ENCODE measurements at regions of chr1 and their contacts with region 1.

Region 1: GRCh38 chr1:173020138-173020750 is 30.5 kb downstream of the TNFSF18 start:
- DNase-seq: no peak
- H3K4me3 Mint-ChIP-seq: no peak overlapping the region
- H3K27ac Mint-ChIP-seq: no peak overlapping the region
- H3K4me1 Mint-ChIP-seq: no peaks in the 10 kb centered on the region
- H3K27me3 Mint-ChIP-seq: peaks cover 9% of the 10 kb centered on the region

Region 2: DNA sequence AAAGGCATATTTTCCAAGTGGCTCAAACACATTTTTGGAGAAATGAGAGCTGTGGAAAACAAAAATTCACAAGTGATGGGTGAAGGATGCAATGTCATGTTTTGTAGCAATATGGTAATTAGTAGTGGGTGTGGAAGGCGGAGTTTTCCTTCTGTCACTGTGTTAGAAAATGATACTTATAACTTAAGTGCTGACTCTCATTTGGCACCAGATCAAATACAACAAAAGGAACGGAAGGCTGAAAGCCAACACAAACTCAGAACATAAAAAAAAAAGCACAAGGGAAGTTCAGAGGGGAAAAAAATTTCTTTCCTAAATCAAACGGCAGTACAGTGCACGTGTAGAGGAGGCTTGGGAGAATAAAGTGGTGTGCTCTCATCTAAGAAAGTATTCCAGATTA is 30.6 kb after region 1 on chr1 and contains the start of gene TNFSF18:
- intact Hi-C with region 1: loop called (anchors 1 kb)
- DNase-seq: no peak
- H3K4me3 Mint-ChIP-seq: no peak within 1 kb of the TSS
- H3K27ac Mint-ChIP-seq: no peak within 1 kb of the TSS
- H3K4me1 Mint-ChIP-seq: no peaks in the 10 kb centered on the region
- H3K27me3 Mint-ChIP-seq: peaks cover 15% of the 10 kb centered on the region
- total RNA-seq, gene TNFSF18: not detected in 2 replicates

Region 3: GRCh38 chr1:173314656-173315055 is 294.4 kb after region 1 on chr1:
- intact Hi-C with region 1: no loop called
- DNase-seq: no peak
- H3K4me3 Mint-ChIP-seq: no peak overlapping the region
- H3K27ac Mint-ChIP-seq: no peak overlapping the region
- H3K4me1 Mint-ChIP-seq: no peaks in the 10 kb centered on the region
- H3K27me3 Mint-ChIP-seq: peaks cover 12% of the 10 kb centered on the region